ENCODE measurements at regions of chr7 and their contacts with region 1.

Region 1: DNA sequence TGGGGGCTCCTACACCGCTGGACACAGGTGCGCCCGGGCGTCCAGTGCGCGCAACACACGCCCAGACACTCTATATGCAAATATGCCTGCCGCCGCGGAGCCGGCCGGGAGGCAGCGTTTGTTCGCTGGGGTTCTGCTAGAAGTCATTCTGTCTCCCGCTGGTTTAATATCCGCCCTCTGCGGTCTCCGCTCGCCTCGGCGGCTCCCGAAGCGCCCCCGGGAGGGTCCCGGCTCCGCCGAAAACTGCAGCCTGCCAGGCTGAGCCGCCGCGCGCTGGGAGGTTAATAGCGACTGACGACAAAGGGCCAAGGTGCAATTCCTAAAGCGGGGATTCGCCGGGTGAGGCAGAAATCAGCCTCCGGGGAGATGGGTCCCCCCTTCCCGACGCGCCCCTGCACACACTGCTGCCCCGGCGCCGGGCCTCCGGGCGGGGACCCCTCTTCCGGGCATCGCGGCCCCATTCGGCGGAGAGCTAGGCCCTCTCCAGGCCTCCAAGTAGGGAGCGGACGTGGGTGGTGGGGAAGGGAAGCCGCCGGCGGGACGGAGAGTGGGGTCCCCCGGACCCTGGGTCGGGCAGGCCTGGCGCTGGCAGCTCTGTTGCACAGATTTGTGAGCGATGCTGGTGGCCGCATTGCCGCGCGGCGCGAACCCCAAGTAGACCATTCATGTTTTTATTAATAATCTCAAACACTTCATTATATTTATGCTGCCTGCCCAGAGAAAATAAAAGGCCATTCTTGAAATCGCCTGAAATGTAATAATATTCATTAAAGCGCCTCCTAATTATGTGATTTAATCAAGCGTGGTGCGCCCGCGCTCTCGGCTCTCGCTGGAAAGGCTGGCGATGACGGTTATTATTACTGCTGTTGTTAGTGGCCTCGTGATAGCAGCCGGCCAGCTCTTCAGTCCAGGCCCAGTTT is 9.1 kb downstream of the EN2 start:
- DNase-seq: no peak
- ATAC-seq: peak; percentile 34
- H3K4me3 Mint-ChIP-seq: peak overlapping the region; percentile 44
- H3K27ac Mint-ChIP-seq: no peak overlapping the region
- H3K4me1 Mint-ChIP-seq: peaks cover 23% of the 10 kb centered on the region
- H3K27me3 Mint-ChIP-seq: peaks cover 71% of the 10 kb centered on the region
- CTCF ChIP-seq: no peak

Region 2: GRCh38 chr7:155450970-155451801 is 15.9 kb before region 1 on chr7:
- CTCF ChIA-PET with region 1: no interaction called
- POLR2A ChIA-PET with region 1: no interaction called
- intact Hi-C with region 1: loop called (anchors 2 kb)
- DNase-seq: no peak
- ATAC-seq: no peak
- H3K4me3 Mint-ChIP-seq: no peak overlapping the region
- H3K27ac Mint-ChIP-seq: no peak overlapping the region
- H3K4me1 Mint-ChIP-seq: peaks cover 24% of the 10 kb centered on the region
- H3K27me3 Mint-ChIP-seq: peaks cover 59% of the 10 kb centered on the region
- CTCF ChIP-seq: no peak

Region 3: GRCh38 chr7:155490697-155491628 is 23.9 kb after region 1 on chr7:
- CTCF ChIA-PET with region 1: no interaction called
- POLR2A ChIA-PET with region 1: no interaction called
- intact Hi-C with region 1: loop called (anchors 2 kb)
- DNase-seq: no peak
- ATAC-seq: peak; percentile 96
- H3K4me3 Mint-ChIP-seq: peak overlapping the region; percentile 89
- H3K27ac Mint-ChIP-seq: peak overlapping the region; percentile 91
- H3K4me1 Mint-ChIP-seq: peaks cover 25% of the 10 kb centered on the region
- H3K27me3 Mint-ChIP-seq: peaks cover 7% of the 10 kb centered on the region
- CTCF ChIP-seq: no peak

Region 4: DNA sequence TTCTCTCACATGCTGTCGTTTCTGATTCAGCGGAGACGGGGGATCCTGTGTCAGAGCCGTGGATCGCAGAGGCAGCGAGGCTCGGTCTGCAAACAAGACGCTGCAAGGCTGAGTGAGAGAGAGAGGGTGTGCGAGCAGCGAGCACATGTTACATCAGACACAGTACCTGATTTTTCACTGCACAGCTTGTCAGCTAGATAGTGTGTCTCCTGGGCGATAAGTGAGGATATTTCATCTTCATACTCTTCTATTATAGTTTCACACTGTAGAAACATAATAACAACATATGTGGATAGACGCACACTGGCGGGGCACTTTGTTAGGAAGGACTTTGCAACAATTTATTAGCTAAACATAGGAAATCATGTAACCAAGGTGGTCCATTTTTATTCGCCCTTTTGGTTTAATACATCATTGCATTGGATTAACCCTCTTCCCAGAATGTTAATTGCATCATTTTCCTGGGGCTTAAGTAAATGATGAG is 39.8 kb after region 1 on chr7:
- CTCF ChIA-PET with region 1: no interaction called
- POLR2A ChIA-PET with region 1: no interaction called
- intact Hi-C with region 1: loop called (anchors 2 kb)
- DNase-seq: no peak
- ATAC-seq: no peak
- H3K4me3 Mint-ChIP-seq: no peak overlapping the region
- H3K27ac Mint-ChIP-seq: no peak overlapping the region
- H3K4me1 Mint-ChIP-seq: peaks cover 13% of the 10 kb centered on the region
- H3K27me3 Mint-ChIP-seq: peaks cover 68% of the 10 kb centered on the region
- CTCF ChIP-seq: no peak

Region 5: DNA sequence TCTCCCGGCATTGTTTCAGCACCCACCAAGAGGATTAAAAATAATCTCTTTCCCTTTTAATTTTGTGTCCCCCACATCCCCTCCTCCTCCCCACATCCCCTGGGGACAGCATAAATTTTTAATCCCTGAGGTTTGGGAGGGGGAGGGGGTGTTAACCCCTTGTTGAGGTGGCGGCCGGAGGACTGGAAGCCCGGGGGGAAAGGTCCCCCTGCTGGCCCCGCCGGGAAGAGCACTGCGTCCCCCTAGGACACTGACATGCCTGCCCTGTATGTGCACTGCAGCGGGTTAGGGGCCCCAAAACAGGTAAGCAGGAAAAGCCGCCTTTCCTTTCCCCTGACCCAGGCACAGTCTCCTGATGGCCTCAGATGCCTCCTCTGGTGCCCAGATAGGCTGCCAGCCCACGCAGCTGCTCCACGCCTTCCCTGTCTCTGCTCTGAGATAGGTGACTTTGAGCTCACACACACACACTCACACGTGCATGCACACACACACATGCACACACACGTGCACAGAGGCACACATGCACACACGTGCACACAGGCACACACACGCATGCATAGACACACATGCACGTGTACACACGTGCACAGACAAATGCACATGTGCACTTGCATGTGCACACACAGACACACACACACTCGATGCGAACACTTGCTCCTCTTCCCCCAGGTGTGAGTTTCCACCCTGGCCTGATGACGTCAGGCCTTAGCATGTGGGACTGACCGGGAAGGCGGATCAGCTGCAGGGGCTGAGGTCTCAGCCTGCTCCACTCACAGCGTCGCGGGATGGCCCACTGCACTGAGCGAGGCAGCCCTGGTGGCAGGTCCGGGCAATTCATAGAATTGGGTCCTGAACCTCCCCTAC is 67.0 kb after region 1 on chr7:
- CTCF ChIA-PET with region 1: no interaction called
- POLR2A ChIA-PET with region 1: no interaction called
- intact Hi-C with region 1: loop called (anchors 5 kb)
- DNase-seq: no peak
- ATAC-seq: peak; percentile 65
- H3K4me3 Mint-ChIP-seq: peak overlapping the region; percentile 69
- H3K27ac Mint-ChIP-seq: no peak overlapping the region
- H3K4me1 Mint-ChIP-seq: peaks cover 15% of the 10 kb centered on the region
- H3K27me3 Mint-ChIP-seq: peaks cover 66% of the 10 kb centered on the region
- CTCF ChIP-seq: no peak

Region 6: GRCh38 chr7:156566812-156567549 is 1099.9 kb after region 1 on chr7:
- CTCF ChIA-PET with region 1: no interaction called
- POLR2A ChIA-PET with region 1: no interaction called
- intact Hi-C with region 1: no loop called
- DNase-seq: no peak
- ATAC-seq: no peak
- H3K4me3 Mint-ChIP-seq: no peak overlapping the region
- H3K27ac Mint-ChIP-seq: no peak overlapping the region
- H3K4me1 Mint-ChIP-seq: peaks cover 6% of the 10 kb centered on the region
- H3K27me3 Mint-ChIP-seq: peaks cover 2% of the 10 kb centered on the region
- CTCF ChIP-seq: no peak

Region 7: GRCh38 chr7:157004050-157004838 is 1537.2 kb after region 1 on chr7:
- CTCF ChIA-PET with region 1: no interaction called
- POLR2A ChIA-PET with region 1: no interaction called
- intact Hi-C with region 1: loop called (anchors 5 kb)
- DNase-seq: no peak
- ATAC-seq: no peak
- H3K4me3 Mint-ChIP-seq: no peak overlapping the region
- H3K27ac Mint-ChIP-seq: no peak overlapping the region
- H3K4me1 Mint-ChIP-seq: peaks cover 26% of the 10 kb centered on the region
- H3K27me3 Mint-ChIP-seq: peaks cover 53% of the 10 kb centered on the region
- CTCF ChIP-seq: no peak

Measured in activated B cell treated with CpG ODN at 0.5 μM for 24 hours (primary cell).